BJ (cell line): ENCODE measurements at regions of chr7 and their contacts with region 1.

Region 1: DNA sequence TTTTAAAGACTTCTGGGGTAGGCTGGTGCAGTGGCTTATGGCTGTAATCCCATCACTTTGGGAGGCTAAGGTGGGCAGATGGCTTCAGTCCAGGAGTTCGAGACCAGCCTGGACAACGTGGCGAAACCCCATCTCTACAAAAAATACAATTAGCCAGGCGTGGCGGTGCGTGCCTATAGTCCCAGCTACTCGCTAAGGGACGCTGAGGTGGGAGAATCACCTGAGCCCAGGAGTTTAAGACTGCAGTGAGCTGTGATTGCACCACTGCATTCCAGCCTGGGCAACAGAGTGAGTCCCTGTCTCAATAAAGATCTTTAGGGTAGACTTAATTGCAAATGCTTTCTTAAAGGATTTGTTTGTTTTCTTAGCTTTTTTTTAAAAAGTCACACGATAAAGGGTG is 29.3 kb downstream of the PTPN12 start:
- DNase-seq: no peak
- H3K4me3 ChIP-seq: no peak overlapping the region
- H3K27me3 ChIP-seq: no peaks in the 10 kb centered on the region
- CTCF ChIP-seq: no peak

Region 2: GRCh38 chr7:77580762-77581350 is 14.4 kb after region 1 on chr7:
- CTCF ChIA-PET with region 1: no interaction called
- POLR2A ChIA-PET with region 1: interaction called, 12 read pairs
- DNase-seq: peak; percentile 30
- H3K4me3 ChIP-seq: no peak overlapping the region
- H3K27me3 ChIP-seq: no peaks in the 10 kb centered on the region
- CTCF ChIP-seq: no peak

Region 3: GRCh38 chr7:77600952-77601351 is 34.5 kb after region 1 on chr7:
- CTCF ChIA-PET with region 1: no interaction called
- POLR2A ChIA-PET with region 1: no interaction called
- DNase-seq: no peak
- H3K4me3 ChIP-seq: no peak overlapping the region
- H3K27me3 ChIP-seq: no peaks in the 10 kb centered on the region
- CTCF ChIP-seq: no peak